ENCODE measurements at regions of chr4 and their contacts with region 1.

Region 1: DNA sequence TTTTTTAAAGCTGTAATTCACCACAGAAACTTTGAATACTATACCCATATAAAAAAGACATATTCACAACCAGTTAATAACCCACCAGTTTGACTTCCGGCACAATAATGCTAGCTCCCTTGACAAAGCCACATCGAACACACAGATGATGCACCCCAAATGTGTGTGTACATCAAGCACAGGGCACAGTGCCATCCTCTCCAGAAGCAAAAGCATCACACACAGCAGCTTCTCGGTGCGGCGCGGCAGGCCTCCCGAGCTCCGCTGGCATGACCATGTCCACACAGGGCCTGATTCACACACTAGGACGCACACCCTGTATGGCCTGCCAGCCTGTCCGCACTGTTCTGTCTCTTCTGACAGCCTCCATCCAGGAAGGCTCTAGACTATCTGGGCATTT is 88.0 kb downstream of the LEF1 start:
- DNase-seq: peak in 8 of 9 donors; percentile 21 to 85 (median 78)
- ATAC-seq: peak; percentile 90
- H3K4me3 ChIP-seq: peak overlapping the region; percentile 3
- H3K4me3 Mint-ChIP-seq: peak overlapping the region; percentile 75 to 89 (median 82)
- H3K27ac ChIP-seq: peak overlapping the region; percentile 71
- H3K27ac Mint-ChIP-seq: peak overlapping the region; percentile 83 to 98 (median 95)
- H3K4me1 ChIP-seq: peaks cover 0 to 53% of the 10 kb centered on the region in 2 donors
- H3K4me1 Mint-ChIP-seq: peaks cover 24 to 90% (median 75%) of the 10 kb centered on the region in 7 donors
- H3K27me3 ChIP-seq: no peaks in the 10 kb centered on the region
- H3K27me3 Mint-ChIP-seq: no peaks in the 10 kb centered on the region

Region 2: DNA sequence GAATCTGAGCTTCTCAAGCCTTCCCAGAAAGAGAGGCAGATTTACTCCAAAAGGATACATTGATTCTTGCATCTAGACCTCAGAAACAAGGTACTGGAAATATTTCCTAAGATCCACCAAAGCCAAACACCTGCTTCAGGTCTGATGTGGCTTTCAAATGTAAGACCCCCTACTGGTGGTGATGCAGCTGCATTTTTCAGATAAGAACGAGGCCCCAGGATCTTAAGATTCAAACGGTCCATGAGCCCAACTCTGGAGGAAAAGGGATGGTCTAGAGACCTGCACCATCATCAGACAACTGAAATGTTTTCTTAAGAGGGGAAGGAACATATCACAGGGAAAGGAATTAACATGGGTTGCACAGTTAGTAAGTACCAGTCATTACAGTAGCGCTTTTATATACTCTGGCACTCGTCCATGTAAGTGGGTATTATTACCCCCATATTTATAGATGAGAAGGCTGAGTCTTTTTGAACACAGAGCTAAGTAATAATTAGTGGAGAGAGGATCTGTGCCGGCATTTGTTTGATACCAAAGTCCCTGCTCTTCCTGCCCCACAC is 14.3 kb after region 1 on chr4:
- CTCF ChIA-PET with region 1: interaction called, 4 read pairs
- POLR2A ChIA-PET with region 1: interaction called, 15 read pairs
- intact Hi-C with region 1: loop called in 1 of 2 experiments (anchors 1 kb)
- DNase-seq: no peak
- ATAC-seq: no peak
- H3K4me3 ChIP-seq: no peak overlapping the region
- H3K4me3 Mint-ChIP-seq: peak overlapping the region; percentile 54 to 85 (median 64)
- H3K27ac ChIP-seq: peak overlapping the region; percentile 57
- H3K27ac Mint-ChIP-seq: peak overlapping the region; percentile 35 to 92 (median 90)
- H3K4me1 ChIP-seq: peaks cover 7 to 82% of the 10 kb centered on the region in 2 donors
- H3K4me1 Mint-ChIP-seq: peaks cover 51 to 97% (median 90%) of the 10 kb centered on the region in 7 donors
- H3K27me3 ChIP-seq: no peaks in the 10 kb centered on the region
- H3K27me3 Mint-ChIP-seq: no peaks in the 10 kb centered on the region

Region 3: DNA sequence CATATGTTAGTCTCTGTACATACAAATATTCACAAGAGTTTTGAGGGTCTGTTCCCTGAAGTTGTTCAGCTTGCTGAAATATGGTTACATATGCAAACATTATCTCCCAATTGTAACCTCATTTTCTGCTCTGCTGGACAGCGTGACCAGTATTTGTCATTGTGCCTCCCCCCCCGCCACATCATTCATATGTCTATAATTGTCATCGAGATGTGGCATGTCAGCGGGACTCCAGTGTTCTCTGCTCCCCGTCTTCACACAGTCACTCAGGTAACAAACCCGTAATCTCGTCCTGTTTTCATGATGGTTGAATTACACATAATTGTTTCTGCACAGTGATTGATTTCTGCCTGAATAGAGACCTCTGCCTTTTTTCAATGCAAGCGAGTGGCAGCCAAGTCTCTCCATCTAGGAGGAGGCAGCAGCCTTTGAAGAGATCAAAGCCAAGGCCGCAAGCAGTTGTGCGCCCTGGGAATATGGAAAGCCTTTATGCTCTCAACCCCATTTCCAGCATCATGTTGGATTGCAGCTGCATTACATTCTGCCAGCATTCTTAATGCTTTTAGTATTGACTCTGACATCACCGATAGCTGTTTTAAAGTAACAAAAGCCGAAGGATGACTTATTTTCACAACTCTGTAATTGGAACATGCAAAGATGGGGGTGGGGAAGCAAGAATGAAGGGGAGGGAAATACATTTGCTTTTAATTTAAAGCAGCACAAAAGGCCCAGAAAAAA is 60.6 kb after region 1 on chr4:
- CTCF ChIA-PET with region 1: no interaction called
- POLR2A ChIA-PET with region 1: interaction called, 6 read pairs
- intact Hi-C with region 1: loop called in 1 of 2 experiments (anchors 2 kb)
- DNase-seq: peak in 1 of 9 donors; percentile 53
- ATAC-seq: no peak
- H3K4me3 ChIP-seq: peak overlapping the region; percentile 38
- H3K4me3 Mint-ChIP-seq: peak overlapping the region; percentile 79 to 91 (median 84)
- H3K27ac ChIP-seq: peak overlapping the region; percentile 81
- H3K27ac Mint-ChIP-seq: peak overlapping the region; percentile 85 to 98 (median 95)
- H3K4me1 ChIP-seq: peaks cover 26 to 97% of the 10 kb centered on the region in 2 donors
- H3K4me1 Mint-ChIP-seq: peaks cover 61 to 99% (median 95%) of the 10 kb centered on the region in 7 donors
- H3K27me3 ChIP-seq: no peaks in the 10 kb centered on the region
- H3K27me3 Mint-ChIP-seq: no peaks in the 10 kb centered on the region

Measured in naive thymus-derived CD4-positive, alpha-beta T cell (primary cell).